Activated B cell treated with CpG ODN at 0.5 μM for 24 hours (primary cell): ENCODE measurements at regions of chr7 and their contacts with region 1.

Region 1: DNA sequence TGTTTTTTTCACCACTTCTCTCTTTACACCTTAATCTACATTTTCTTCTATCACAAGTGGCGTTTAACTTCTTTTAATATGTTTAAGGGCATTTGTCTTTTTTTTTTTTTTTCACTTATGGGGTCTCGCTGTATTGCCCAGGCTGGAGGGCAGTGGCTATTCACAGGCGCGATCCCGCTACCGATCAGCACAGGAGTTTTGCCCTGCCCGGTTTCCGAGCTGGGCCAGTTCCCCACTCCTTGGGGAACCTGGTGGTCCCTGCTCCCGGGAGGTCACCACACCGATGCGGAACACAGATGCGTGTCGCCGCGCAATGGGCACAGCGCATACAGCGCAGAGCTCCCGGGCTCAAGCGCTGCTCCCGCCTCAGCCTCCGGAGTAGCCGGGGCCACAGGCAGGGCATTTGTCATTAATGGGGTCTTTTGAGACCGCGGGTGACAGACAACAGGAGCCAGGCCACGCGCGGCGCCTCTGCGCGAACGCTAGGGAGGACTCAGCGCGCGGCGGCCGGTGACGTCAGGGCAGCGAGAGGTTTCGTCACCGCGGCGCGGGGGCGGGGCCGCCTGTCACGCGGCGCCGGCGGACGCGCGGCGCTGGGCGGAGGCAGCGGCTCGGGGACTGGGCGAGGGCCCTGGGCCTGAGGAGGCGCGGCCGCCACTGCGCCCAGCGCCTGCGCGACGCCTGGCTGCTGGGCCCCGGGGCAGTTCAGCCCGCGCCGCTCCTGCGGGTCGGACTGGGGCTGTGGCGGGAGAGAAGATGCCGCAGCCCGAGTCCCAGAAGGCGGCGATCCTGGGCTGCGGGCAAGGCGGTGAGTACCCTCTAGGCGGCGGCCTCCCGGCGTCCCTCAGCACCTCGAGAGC is at the start of gene GALNT11:
- DNase-seq: peak; percentile 90
- ATAC-seq: peak; percentile 92
- H3K4me3 Mint-ChIP-seq: peak within 1 kb of the TSS; percentile 87
- H3K27ac Mint-ChIP-seq: peak within 1 kb of the TSS; percentile 81
- H3K4me1 Mint-ChIP-seq: peaks cover 11% of the 10 kb centered on the region
- H3K27me3 Mint-ChIP-seq: no peaks in the 10 kb centered on the region
- CTCF ChIP-seq: no peak
- total RNA-seq, gene GALNT11: 9.0 and 10.8 TPM in 2 replicates

Region 2: DNA sequence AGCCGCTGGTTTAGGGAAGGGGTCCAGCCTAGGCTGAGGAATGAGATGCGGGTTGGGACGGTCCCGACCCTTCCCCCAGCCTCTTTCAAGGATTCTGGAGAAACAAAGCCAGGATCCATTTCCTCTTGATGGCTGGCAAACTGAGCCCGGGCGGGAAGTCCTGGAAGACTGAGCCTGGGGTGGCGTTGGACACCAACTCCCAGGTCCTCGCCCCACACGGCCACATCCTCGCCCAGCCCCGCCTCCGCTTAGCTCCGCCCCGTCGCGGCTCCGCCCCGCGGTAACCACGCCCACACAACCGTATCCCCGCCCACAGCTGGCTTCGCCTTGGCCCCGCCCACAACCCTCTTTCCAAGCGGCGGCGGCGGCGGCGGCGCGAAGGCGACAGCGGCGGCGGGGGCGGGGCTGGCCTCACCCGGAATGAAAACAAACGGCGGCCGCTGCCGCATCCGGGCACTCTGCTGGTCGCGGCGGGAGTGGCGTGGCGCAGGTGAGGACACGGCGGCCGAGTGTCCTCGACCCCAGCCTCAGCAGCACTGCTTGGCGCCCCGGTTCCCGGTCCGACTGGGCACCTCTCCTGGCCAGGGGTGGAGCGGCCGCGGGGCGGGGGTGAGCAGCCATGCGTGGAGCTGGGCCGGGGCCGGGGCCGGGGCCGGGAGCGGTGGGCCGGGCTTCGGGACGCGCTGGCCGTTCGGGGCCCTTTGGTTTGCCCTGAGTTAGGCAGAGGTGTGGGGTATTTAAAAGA is 683.8 kb before region 1 on chr7 and contains the start of gene NUB1:
- CTCF ChIA-PET with region 1: no interaction called
- POLR2A ChIA-PET with region 1: no interaction called
- intact Hi-C with region 1: no loop called
- DNase-seq: peak; percentile 99
- ATAC-seq: peak; percentile 90
- H3K4me3 Mint-ChIP-seq: peak within 1 kb of the TSS; percentile 86
- H3K27ac Mint-ChIP-seq: peak within 1 kb of the TSS; percentile 93
- H3K4me1 Mint-ChIP-seq: peaks cover 52% of the 10 kb centered on the region
- H3K27me3 Mint-ChIP-seq: no peaks in the 10 kb centered on the region
- CTCF ChIP-seq: no peak
- total RNA-seq, gene NUB1: 47.5 and 52.7 TPM in 2 replicates

Region 3: DNA sequence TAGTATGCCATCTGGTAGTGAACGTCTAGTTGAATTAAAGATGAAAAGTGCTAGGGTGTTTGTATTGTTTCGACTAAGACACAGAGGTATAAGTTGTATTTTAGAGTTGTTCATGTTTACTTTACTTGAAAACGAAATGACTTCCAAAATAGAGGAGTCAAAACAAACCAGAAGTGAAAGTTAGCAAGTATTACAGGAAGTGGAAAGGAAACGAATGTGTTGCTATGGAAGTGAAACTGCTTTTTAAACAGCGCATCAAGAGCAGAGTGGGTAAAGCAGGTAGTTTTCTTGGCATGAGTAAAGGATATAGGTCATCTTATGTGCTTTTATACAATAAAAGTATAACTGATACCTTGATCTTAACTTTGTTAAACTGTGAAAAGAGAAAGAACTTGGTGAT is 89.1 kb before region 1 on chr7:
- CTCF ChIA-PET with region 1: no interaction called
- POLR2A ChIA-PET with region 1: no interaction called
- intact Hi-C with region 1: loop called (anchors 1 kb)
- DNase-seq: no peak
- ATAC-seq: peak; percentile 78
- H3K4me3 Mint-ChIP-seq: peak overlapping the region; percentile 77
- H3K27ac Mint-ChIP-seq: peak overlapping the region; percentile 94
- H3K4me1 Mint-ChIP-seq: peaks cover 45% of the 10 kb centered on the region
- H3K27me3 Mint-ChIP-seq: peaks cover 3% of the 10 kb centered on the region
- CTCF ChIP-seq: no peak

Region 4: DNA sequence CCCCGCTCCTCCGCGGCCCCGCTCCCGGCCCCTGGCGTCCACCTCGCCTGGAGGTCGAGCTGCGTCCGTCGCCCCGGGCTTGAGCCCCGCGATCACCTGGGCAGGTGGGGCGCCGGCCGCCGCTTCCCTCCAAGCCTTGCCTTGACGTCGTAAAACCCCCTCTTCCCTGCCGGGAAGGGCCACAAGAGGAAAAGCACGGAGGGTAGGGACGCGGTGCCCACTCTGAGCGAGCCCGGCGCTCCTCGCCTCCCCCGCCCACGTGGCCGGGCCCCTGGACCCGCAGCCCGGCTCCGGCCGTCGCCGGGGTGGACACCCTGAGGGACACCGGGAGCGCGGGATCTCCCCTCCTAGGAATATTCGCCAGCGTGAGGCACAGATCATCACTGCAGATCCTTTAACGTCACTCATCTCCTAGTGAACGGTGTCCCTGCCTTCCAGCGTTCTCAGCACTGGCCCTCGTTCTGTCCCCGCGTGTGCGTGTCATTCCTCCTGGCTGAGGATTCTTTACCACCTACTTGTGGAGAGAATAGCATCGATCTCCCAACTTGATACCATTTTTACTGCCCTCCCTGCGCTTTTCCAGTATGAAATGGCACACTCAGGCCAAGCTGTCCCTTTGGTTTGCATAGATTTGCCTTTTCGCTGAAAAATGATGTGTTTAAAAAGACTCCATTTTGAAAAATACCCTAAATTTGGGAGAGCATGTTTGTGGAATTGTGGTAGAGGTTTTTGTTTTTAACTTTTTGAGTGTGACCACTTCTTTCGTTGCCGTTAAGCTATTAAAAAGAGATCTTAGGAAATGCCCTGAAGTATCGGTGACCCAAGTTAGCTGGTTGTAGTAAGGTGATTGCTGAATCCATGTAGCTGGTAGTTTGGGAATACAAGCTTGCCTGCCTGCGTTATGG is 734.9 kb after region 1 on chr7:
- CTCF ChIA-PET with region 1: no interaction called
- POLR2A ChIA-PET with region 1: no interaction called
- intact Hi-C with region 1: loop called (anchors 2 kb)
- DNase-seq: no peak
- ATAC-seq: peak; percentile 17
- H3K4me3 Mint-ChIP-seq: peak overlapping the region; percentile 91
- H3K27ac Mint-ChIP-seq: peak overlapping the region; percentile 77
- H3K4me1 Mint-ChIP-seq: peaks cover 21% of the 10 kb centered on the region
- H3K27me3 Mint-ChIP-seq: no peaks in the 10 kb centered on the region
- CTCF ChIP-seq: no peak